GM10248 (cell line): ENCODE measurements at regions of chr10 and their contacts with region 1.

Region 1: DNA sequence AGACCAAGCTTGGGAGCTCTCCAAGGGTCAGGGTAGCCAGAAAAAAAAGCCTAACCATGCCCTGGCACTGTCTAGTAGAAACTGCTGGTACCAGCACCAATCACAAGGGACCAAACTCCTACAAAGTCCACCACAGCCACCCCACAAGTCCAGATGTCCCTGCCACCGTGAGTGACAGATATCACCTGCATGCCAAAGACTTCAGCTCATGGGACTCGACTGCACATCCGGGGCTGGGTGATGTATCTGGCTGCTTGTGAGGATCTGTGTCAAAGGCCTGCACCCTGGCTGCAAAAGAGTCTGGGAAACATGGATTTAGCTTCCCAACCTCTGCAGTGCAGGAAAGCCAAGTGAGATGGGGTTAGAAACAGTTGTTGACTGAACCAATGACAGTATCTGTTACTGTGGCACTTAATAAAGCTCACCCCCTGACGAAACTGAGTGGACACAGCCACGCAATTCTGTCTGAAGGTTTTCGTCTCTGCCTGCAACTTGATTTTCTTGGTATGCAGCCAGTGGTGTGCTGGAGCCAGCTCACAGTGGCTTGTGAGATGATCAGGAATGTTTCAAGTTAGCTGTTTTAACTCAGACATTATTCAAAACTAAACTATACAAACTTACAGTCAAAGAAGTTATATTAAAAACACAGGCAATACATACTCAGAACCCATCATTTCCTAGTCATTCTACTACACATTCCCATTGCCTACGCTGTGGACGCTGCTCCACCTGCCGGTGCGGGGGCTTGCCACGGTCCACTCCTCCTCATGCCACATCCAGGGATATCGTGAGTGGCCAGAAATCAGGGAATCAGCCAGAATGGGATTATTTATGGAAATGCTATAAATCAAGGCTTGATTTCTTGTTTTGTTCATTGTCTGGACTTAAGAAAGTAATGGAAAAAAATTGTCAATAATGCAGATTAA is 9.2 kb downstream of the ZNF488 start:
- DNase-seq: no peak
- CTCF ChIP-seq: no peak

Region 2: DNA sequence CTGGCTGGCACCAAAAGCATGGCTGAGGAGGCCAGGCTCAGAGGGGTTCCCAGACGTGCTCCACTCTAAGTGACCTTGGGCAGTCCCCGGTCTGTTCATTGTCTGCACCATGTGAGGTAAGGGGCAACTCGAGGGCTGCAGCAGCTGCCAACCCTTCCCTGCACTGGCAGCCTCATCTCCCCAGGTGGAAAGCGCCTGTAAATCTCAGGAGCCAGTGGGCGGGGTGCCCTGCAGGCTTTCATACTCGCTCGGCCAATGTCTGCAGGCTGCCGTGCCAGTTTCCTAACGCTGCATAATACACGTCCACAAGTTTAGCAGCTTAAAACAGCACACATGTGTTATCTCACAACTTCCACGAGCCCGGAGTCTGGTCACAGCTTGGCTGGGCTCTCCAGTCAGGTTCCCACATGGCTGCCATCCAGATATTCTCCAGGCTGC is 87.5 kb before region 1 on chr10:
- CTCF ChIA-PET with region 1: no interaction called
- POLR2A ChIA-PET with region 1: no interaction called
- DNase-seq: no peak
- CTCF ChIP-seq: no peak

Region 3: GRCh38 chr10:47361293-47361692 is 13.6 kb before region 1 on chr10:
- CTCF ChIA-PET with region 1: interaction called, 10 read pairs
- POLR2A ChIA-PET with region 1: no interaction called
- DNase-seq: peak; percentile 63
- CTCF ChIP-seq: peak; percentile 54